SK-N-SH (cell line): ENCODE measurements at regions of chr12 and their contacts with region 1.

Region 1: DNA sequence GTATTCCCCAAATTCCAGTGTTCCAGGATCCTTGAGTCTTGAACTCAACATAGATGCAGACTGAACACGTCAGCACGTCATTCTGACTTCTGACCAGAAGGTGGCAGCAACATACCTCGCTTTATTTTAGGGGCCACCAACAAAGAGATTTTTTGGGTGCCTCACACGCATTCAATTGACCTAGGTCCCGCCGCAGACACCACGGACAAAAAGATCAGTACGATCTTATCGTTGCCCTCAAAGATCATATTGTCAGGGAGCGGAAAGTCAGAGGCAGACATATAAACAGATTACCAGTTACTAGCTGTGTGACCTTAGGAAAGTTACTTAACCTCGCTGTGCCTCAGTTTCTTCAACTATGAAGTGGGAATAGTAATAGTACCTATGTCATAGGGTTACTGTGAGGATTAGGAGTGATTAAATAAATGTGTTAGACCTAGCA is 6.5 kb upstream of the PRPH start:
- DNase-seq: peak; percentile 76
- H3K4me3 ChIP-seq: no peak overlapping the region; a peak in 1 of 4 replicates
- H3K27ac ChIP-seq: no peak overlapping the region
- H3K4me1 ChIP-seq: peaks cover 6 to 18% of the 10 kb centered on the region in 2 experiments; a peak in 3 of 4 replicates
- H3K27me3 ChIP-seq: no peaks in the 10 kb centered on the region
- CTCF ChIP-seq: peak; percentile 92
- EP300 ChIP-seq: no peak
- RAD21 ChIP-seq: peak; percentile 87

Region 2: DNA sequence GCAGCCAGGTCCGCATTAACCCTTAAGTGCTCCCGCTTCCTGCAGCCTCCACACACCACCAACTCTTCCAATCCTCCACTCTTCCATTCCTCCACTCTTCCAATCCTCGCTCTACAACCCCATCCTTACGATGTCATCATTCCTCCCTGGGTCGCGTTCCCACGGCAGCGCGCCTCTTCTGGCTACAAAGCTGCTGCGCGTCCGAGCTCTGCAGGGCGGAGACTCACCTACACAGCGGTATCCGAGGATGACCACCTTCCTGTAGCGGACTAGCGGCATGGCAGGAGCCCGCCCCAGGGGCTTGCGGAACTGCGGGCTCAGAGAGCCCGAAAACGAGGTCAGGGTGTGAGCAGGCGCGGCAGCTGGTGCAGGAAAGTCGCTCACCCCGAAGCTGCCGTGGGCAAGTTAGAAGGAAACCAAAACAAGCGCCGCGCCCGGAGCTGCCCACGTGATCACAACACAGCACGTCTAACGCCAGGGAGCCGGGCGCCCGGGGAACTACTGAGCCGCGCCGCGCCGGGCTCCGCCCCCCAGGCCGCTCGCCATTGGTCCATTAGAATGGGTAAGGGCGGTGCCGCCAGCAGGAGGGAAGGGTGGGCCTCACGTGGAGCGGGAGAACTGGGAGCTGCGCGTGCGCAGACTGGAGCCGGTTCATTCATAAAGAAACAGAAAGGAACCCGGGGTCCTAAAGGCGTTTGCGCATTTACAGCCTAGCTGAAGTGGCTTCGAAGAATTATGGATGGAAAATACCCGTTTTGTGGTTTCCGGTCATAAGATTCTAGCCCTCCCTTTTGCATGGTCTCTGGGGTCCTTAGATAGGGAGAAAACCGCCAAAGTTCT is 218.7 kb before region 1 on chr12 and contains the start of gene RHEBL1:
- CTCF ChIA-PET with region 1: no interaction called
- POLR2A ChIA-PET with region 1: no interaction called
- DNase-seq: peak; percentile 97
- H3K4me3 ChIP-seq: peak within 1 kb of the TSS; percentile 70 to 99
- H3K27ac ChIP-seq: peak within 1 kb of the TSS; percentile 60 to 67
- H3K4me1 ChIP-seq: peaks cover 3 to 5% of the 10 kb centered on the region in 2 experiments; a peak in 1 of 4 replicates
- H3K27me3 ChIP-seq: no peaks in the 10 kb centered on the region
- CTCF ChIP-seq: peak; percentile 28; the same call in 1 of the 2 replicates
- EP300 ChIP-seq: no peak
- RAD21 ChIP-seq: no peak
- polyA plus RNA-seq, gene RHEBL1: 2.2 and 2.3 TPM in 2 replicates

Region 3: GRCh38 chr12:49274396-49275286 is 13.8 kb before region 1 on chr12:
- CTCF ChIA-PET with region 1: interaction called, 16 read pairs
- POLR2A ChIA-PET with region 1: no interaction called
- DNase-seq: no peak
- H3K4me3 ChIP-seq: no peak overlapping the region
- H3K27ac ChIP-seq: no peak overlapping the region
- H3K4me1 ChIP-seq: peaks cover 6 to 15% of the 10 kb centered on the region in 2 experiments; a peak in 2 of 4 replicates
- H3K27me3 ChIP-seq: no peaks in the 10 kb centered on the region
- CTCF ChIP-seq: no peak
- EP300 ChIP-seq: no peak
- RAD21 ChIP-seq: no peak

Region 4: DNA sequence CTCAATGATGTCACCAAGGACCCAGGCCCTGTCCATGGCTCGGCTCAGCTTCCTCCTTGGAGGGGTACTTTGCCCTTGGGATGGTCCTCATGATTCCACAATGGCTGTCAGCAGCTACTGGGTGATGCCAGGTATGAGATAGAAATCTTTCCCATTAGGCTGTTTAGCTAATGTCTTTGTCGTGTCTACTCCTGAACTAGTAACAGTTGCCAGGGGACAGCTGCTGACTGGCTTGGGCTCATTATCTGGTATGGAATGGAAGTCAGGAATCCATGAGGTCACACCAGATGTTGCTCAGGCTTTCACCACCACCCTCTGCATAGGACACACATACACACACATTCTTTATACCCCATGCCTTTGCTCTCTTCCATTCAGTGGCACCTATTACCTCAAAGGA is 15.7 kb after region 1 on chr12:
- CTCF ChIA-PET with region 1: interaction called, 29 read pairs
- POLR2A ChIA-PET with region 1: interaction called, 7 read pairs
- DNase-seq: peak; percentile 59
- H3K4me3 ChIP-seq: no peak overlapping the region
- H3K27ac ChIP-seq: no peak overlapping the region
- H3K4me1 ChIP-seq: peaks cover 0 to 6% of the 10 kb centered on the region in 2 experiments; a peak in 1 of 4 replicates
- H3K27me3 ChIP-seq: no peaks in the 10 kb centered on the region
- CTCF ChIP-seq: no peak
- EP300 ChIP-seq: no peak
- RAD21 ChIP-seq: no peak